ENCODE measurements at regions of chr16 and their contacts with region 1.

Region 1: DNA sequence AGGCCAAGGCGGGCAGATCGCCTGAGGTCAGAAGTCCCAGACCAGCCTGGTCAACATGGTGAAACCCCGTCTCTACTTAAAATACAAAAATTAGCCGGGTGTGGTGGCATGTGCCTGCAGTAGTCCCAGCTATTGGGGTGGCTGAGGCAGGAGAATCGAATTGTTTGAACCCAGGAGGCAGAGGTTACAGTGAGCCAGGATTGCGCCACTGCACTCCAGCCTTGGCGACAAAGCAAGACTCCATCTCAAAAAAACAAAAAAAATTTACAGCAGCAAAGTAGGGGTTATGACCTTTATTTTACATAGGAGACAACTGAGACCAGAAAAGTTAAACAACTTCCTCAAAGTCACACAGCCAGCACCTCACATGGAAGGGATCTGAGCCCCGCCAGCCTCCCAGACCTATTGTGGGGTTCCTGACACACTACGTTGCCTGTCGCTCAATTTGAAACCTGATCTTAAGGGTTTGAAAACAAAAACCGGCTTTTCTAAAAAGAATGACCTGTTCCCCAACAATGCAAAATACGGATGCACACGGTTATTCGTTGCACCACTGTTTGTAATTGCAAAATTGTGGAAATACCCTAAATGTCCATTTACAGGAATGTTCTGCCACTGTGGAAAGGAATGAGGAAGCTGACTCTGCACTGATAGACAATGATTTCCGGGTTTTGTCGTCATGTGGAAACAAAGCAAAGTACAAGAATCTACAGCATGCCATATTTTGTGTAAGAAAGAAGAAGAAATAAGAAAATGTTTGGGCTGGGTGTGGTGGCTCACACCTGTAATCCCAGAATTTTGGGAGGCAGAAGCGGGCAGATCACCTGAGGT is 77.2 kb downstream of the CNGB1 start:
- DNase-seq: peak; percentile 91
- ATAC-seq: peak; percentile 65
- H3K4me3 ChIP-seq: no peak overlapping the region
- H3K27ac ChIP-seq: peak overlapping the region; percentile 48; the same call in 1 of the 2 replicates
- H3K4me1 ChIP-seq: peaks cover 10% of the 10 kb centered on the region
- H3K27me3 ChIP-seq: no peaks in the 10 kb centered on the region; the same call in 1 of the 2 replicates
- CTCF ChIP-seq: no peak
- POLR2A ChIP-seq: no peak
- RAD21 ChIP-seq: no peak

Region 2: DNA sequence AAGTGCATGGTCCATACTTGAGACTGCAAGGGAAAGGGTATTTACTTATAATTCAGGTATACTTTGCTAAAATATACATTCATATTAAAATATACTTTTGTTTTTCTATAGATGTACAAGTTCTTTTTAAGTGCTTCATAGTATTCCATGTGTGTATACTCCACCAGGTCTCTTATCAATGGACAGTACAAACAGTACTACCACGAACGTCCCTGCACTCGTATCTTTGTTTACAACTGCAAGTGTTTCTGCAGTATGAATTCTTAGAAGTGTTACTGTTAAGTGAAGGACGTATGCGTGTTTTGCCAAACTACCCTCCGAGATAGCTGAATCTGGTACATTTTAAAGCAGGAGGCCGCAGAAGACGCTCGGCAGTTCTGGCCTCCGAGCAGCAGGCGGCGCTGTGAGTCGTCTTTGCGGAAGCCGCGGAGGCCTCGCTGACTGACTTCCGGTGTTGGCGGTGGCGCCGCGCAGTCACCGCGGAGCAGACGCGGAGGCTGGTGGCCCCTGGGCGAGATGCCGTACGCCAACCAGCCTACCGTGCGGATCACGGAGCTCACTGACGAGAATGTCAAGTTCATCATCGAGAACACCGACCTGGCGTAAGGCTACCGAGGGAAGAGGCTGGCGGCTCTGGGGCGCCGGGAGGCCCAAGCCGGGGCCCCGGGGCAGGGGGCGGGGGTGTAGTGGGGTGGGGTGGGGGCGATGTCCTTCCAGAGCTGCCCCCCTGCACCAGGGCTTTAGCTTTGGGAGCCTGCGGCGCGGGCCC is 431.4 kb before region 1 on chr16 and contains the start of gene POLR2C:
- CTCF ChIA-PET with region 1: no interaction called
- POLR2A ChIA-PET with region 1: no interaction called
- dilution Hi-C with region 1: no loop called
- in situ Hi-C with region 1: no loop called
- intact Hi-C with region 1: no loop called
- DNase-seq: peak; percentile 81
- ATAC-seq: peak; percentile 97
- H3K4me3 ChIP-seq: peak within 1 kb of the TSS; percentile 81
- H3K27ac ChIP-seq: peak within 1 kb of the TSS; percentile 95
- H3K4me1 ChIP-seq: peaks cover 4% of the 10 kb centered on the region
- H3K27me3 ChIP-seq: no peaks in the 10 kb centered on the region
- CTCF ChIP-seq: peak; percentile 97
- POLR2A ChIP-seq: peak; percentile 98
- RAD21 ChIP-seq: peak; percentile 42
- total RNA-seq, gene POLR2C: 188 and 340 TPM in 2 replicates

Region 3: GRCh38 chr16:57802341-57803133 is 91.2 kb before region 1 on chr16 and contains the start of gene KIFC3:
- CTCF ChIA-PET with region 1: no interaction called
- POLR2A ChIA-PET with region 1: no interaction called
- dilution Hi-C with region 1: no loop called
- in situ Hi-C with region 1: no loop called
- intact Hi-C with region 1: loop called (anchors 5 kb)
- DNase-seq: peak; percentile 72
- ATAC-seq: peak; percentile 75
- H3K4me3 ChIP-seq: peak within 1 kb of the TSS; percentile 84
- H3K27ac ChIP-seq: peak within 1 kb of the TSS; percentile 93
- H3K4me1 ChIP-seq: peaks cover 33% of the 10 kb centered on the region
- H3K27me3 ChIP-seq: no peaks in the 10 kb centered on the region
- CTCF ChIP-seq: peak; percentile 41
- POLR2A ChIP-seq: peak; percentile 68
- RAD21 ChIP-seq: peak; percentile 32; the same call in 1 of the 2 replicates
- total RNA-seq, gene KIFC3: 38.3 and 48.6 TPM in 2 replicates